MCF 10A (cell line): ENCODE measurements at regions of chr16 and their contacts with region 1.

Region 1: DNA sequence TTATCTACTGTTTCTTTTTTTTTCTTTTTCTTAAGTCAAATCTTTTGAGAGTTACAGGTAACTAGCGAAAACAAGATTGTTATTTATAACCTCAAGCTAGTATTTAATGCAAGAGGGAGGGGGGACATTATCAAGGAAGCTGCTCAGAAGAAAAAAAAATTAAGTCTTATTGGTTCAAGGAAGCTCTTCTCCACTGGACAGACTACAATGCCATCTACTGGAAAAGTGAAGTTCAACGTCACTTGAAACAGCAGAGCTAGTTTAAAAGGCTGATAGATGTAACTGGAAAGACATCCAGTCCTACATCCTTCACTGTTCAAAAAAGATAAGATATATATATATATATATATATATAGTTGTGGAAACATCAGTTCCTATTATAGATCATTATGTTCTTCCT is 418.0 kb upstream of the PSMD7 start:
- DNase-seq: peak; percentile 64
- H3K4me3 Mint-ChIP-seq: no peak overlapping the region
- H3K27ac Mint-ChIP-seq: no peak overlapping the region
- H3K4me1 Mint-ChIP-seq: no peaks in the 10 kb centered on the region
- H3K27me3 Mint-ChIP-seq: peaks cover 83% of the 10 kb centered on the region
- CTCF ChIP-seq: peak; percentile 60

Region 2: GRCh38 chr16:72241930-72242329 is 1636.7 kb before region 1 on chr16:
- CTCF ChIA-PET with region 1: interaction called, 3 read pairs
- POLR2A ChIA-PET with region 1: no interaction called
- intact Hi-C with region 1: loop called (anchors 2 kb)
- DNase-seq: peak; percentile 68
- H3K4me3 Mint-ChIP-seq: no peak overlapping the region
- H3K27ac Mint-ChIP-seq: no peak overlapping the region
- H3K4me1 Mint-ChIP-seq: peaks cover 3% of the 10 kb centered on the region
- H3K27me3 Mint-ChIP-seq: no peaks in the 10 kb centered on the region
- CTCF ChIP-seq: peak; percentile 76

Region 3: GRCh38 chr16:72961121-72961763 is 917.4 kb before region 1 on chr16:
- CTCF ChIA-PET with region 1: no interaction called
- POLR2A ChIA-PET with region 1: no interaction called
- intact Hi-C with region 1: loop called (anchors 5 kb)
- DNase-seq: peak; percentile 16
- H3K4me3 Mint-ChIP-seq: no peak overlapping the region
- H3K27ac Mint-ChIP-seq: no peak overlapping the region
- H3K4me1 Mint-ChIP-seq: no peaks in the 10 kb centered on the region
- H3K27me3 Mint-ChIP-seq: no peaks in the 10 kb centered on the region
- CTCF ChIP-seq: peak; percentile 19

Region 4: DNA sequence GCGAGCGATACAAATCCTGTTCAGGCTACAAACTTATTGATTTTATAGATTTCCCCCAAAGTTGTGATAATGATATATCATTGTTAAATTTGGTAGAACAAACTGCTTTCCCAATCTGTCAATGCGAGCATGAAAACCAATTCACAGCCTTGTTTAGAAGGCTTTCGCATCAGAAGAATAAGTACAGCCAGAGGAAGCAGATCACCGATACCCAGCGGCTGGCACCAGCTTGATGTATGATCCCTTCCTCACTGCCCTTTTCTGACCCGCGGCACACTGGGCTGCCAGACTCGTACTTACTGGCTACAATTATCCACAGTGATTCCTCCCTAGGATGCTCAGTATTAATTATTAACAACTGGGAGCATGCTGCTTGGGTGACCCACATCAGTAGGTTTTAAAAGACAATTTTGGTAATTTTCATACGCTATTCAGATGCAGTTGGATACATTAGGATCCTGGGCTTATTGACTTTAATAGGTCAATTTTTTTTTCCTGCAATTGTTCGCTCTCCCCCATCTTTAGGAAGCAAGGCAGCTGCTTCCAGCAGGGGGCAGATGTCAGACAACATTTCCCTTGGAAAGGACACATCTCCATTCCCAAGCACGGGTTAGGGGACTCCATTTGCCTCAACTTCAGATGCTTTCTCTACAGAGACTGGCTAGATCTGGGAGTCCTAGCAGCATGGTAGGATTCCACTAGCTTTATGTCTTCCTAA is 164.7 kb before region 1 on chr16:
- CTCF ChIA-PET with region 1: interaction called, 17 read pairs
- POLR2A ChIA-PET with region 1: no interaction called
- intact Hi-C with region 1: loop called (anchors 1 kb)
- DNase-seq: peak; percentile 63
- H3K4me3 Mint-ChIP-seq: no peak overlapping the region
- H3K27ac Mint-ChIP-seq: no peak overlapping the region
- H3K4me1 Mint-ChIP-seq: no peaks in the 10 kb centered on the region
- H3K27me3 Mint-ChIP-seq: peaks cover 98% of the 10 kb centered on the region
- CTCF ChIP-seq: peak; percentile 49

Region 5: GRCh38 chr16:73891129-73891542 is 12.5 kb after region 1 on chr16:
- CTCF ChIA-PET with region 1: interaction called, 10 read pairs
- POLR2A ChIA-PET with region 1: interaction called, 3 read pairs
- intact Hi-C with region 1: no loop called
- DNase-seq: no peak
- H3K4me3 Mint-ChIP-seq: no peak overlapping the region
- H3K27ac Mint-ChIP-seq: no peak overlapping the region
- H3K4me1 Mint-ChIP-seq: no peaks in the 10 kb centered on the region
- H3K27me3 Mint-ChIP-seq: peaks cover 100% of the 10 kb centered on the region
- CTCF ChIP-seq: no peak

Region 6: GRCh38 chr16:74019612-74020011 is 141.0 kb after region 1 on chr16:
- CTCF ChIA-PET with region 1: no interaction called
- POLR2A ChIA-PET with region 1: no interaction called
- intact Hi-C with region 1: no loop called
- DNase-seq: no peak
- H3K4me3 Mint-ChIP-seq: no peak overlapping the region
- H3K27ac Mint-ChIP-seq: no peak overlapping the region
- H3K4me1 Mint-ChIP-seq: no peaks in the 10 kb centered on the region
- H3K27me3 Mint-ChIP-seq: peaks cover 63% of the 10 kb centered on the region
- CTCF ChIP-seq: no peak